Common myeloid progenitor, CD34-positive (primary cell): ENCODE measurements at regions of chr2 and their contacts with region 1.

Region 1: GRCh38 chr2:112626604-112627059 is 19.1 kb upstream of the SLC20A1 start:
- DNase-seq: peak; percentile 88 to 97 (median 96)
- H3K4me3 ChIP-seq: peak overlapping the region in 3 of 7 experiments; percentile 25 to 51 (median 37)
- H3K27ac ChIP-seq: peak overlapping the region; percentile 11 to 43
- H3K4me1 ChIP-seq: peaks cover 13 to 76% (median 71%) of the 10 kb centered on the region in 4 experiments
- H3K27me3 ChIP-seq: no peaks in the 10 kb centered on the region

Region 2: DNA sequence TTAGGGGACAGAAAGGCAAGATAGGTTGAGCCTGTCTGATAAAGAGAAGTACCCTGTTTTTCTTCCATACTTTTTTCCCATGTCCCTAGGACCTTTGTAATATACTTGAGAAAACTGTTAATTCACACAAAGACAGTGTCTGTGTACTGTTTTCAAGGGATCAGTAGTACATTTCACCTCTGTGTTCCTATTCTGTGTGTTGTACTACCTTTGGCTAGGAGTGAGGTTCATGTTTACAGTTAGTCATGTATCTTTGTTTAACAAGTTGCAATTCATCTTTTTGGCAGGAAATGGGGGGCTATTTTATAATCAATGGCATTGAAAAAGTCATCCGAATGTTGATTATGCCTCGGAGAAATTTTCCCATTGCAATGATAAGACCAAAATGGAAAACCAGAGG is 77.7 kb before region 1 on chr2:
- CTCF ChIA-PET with region 1: no interaction called
- POLR2A ChIA-PET with region 1: no interaction called
- DNase-seq: no peak
- H3K4me3 ChIP-seq: no peak overlapping the region
- H3K27ac ChIP-seq: no peak overlapping the region
- H3K4me1 ChIP-seq: peaks cover 0 to 5% (median under 1%) of the 10 kb centered on the region in 4 experiments
- H3K27me3 ChIP-seq: no peaks in the 10 kb centered on the region

Region 3: GRCh38 chr2:112606488-112606902 is 20.1 kb before region 1 on chr2:
- CTCF ChIA-PET with region 1: interaction called, 22 read pairs
- POLR2A ChIA-PET with region 1: no interaction called
- DNase-seq: no peak
- H3K4me3 ChIP-seq: no peak overlapping the region
- H3K27ac ChIP-seq: no peak overlapping the region
- H3K4me1 ChIP-seq: no peaks in the 10 kb centered on the region
- H3K27me3 ChIP-seq: no peaks in the 10 kb centered on the region

Region 4: GRCh38 chr2:112645310-112646101 is 18.9 kb after region 1 on chr2 and contains the start of gene SLC20A1:
- CTCF ChIA-PET with region 1: interaction called, 183 read pairs
- POLR2A ChIA-PET with region 1: interaction called, 26 read pairs
- DNase-seq: peak; percentile 96 to 98 (median 98)
- H3K4me3 ChIP-seq: peak within 1 kb of the TSS; percentile 84 to 98 (median 90)
- H3K27ac ChIP-seq: peak within 1 kb of the TSS; percentile 57 to 89
- H3K4me1 ChIP-seq: peaks cover 13 to 79% (median 55%) of the 10 kb centered on the region in 4 experiments
- H3K27me3 ChIP-seq: no peaks in the 10 kb centered on the region

Region 5: GRCh38 chr2:112658820-112659667 is 32.4 kb after region 1 on chr2:
- CTCF ChIA-PET with region 1: interaction called, 11 read pairs
- POLR2A ChIA-PET with region 1: interaction called, 5 read pairs
- DNase-seq: peak in 1 of 3 donors; percentile 13
- H3K4me3 ChIP-seq: no peak overlapping the region
- H3K27ac ChIP-seq: peak overlapping the region in 1 of 2 experiments; percentile 30
- H3K4me1 ChIP-seq: peaks cover 0 to 19% (median 15%) of the 10 kb centered on the region in 4 experiments
- H3K27me3 ChIP-seq: no peaks in the 10 kb centered on the region

Region 6: GRCh38 chr2:112674229-112674628 is 47.6 kb after region 1 on chr2:
- CTCF ChIA-PET with region 1: interaction called, 12 read pairs
- POLR2A ChIA-PET with region 1: interaction called, 3 read pairs
- DNase-seq: peak; percentile 86 to 93 (median 91)
- H3K4me3 ChIP-seq: peak overlapping the region in 6 of 7 experiments; percentile 20 to 65 (median 28)
- H3K27ac ChIP-seq: no peak overlapping the region
- H3K4me1 ChIP-seq: peaks cover 0 to 32% (median 18%) of the 10 kb centered on the region in 4 experiments
- H3K27me3 ChIP-seq: no peaks in the 10 kb centered on the region

Region 7: DNA sequence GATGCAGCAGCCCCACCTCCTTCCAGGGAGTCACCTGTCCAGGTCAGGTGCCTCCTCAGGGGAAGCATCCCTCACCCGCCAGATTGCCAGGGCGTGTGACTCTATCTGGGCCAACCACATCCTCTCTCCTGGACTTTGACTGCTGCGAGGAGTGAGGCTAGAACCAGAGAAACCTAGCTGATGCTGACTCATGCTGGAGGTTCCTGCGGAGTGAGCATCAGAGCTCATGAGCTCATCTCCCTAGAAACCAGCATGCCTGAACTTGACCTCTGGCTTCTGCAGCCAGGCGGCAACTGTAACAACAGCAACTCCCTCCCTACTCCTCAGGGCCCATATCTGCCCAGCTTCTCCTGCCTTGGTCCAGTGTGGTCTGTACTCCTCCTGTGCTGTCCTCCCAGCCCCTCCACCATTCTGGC is 65.9 kb after region 1 on chr2:
- CTCF ChIA-PET with region 1: interaction called, 150 read pairs
- POLR2A ChIA-PET with region 1: interaction called, 3 read pairs
- DNase-seq: peak; percentile 72 to 94 (median 94)
- H3K4me3 ChIP-seq: no peak overlapping the region
- H3K27ac ChIP-seq: peak overlapping the region in 1 of 2 experiments; percentile 19
- H3K4me1 ChIP-seq: peaks cover 3 to 43% (median 25%) of the 10 kb centered on the region in 4 experiments
- H3K27me3 ChIP-seq: no peaks in the 10 kb centered on the region